HCT116 (cell line): ENCODE measurements at regions of chr11 and their contacts with region 1.

Region 1: GRCh38 chr11:121591405-121592033 is 138.8 kb upstream of the SORL1-AS1 start:
- DNase-seq: peak; percentile 64
- ATAC-seq: peak; percentile 86
- H3K4me3 ChIP-seq: no peak overlapping the region
- H3K27ac ChIP-seq: no peak overlapping the region
- H3K4me1 ChIP-seq: peaks cover 5 to 15% of the 10 kb centered on the region in 2 experiments; a peak in 3 of 4 replicates
- H3K27me3 ChIP-seq: no peaks in the 10 kb centered on the region
- CTCF ChIP-seq: peak; percentile 78 to 93 (median 88)
- POLR2A ChIP-seq: no peak
- RAD21 ChIP-seq: peak; percentile 97

Region 2: GRCh38 chr11:120929664-120930154 is 661.8 kb before region 1 on chr11:
- CTCF ChIA-PET with region 1: no interaction called
- POLR2A ChIA-PET with region 1: no interaction called
- RAD21 ChIA-PET with region 1: no interaction called
- intact Hi-C with region 1: loop called (anchors 10 kb)
- DNase-seq: peak; percentile 61
- ATAC-seq: peak; percentile 97
- H3K4me3 ChIP-seq: no peak overlapping the region
- H3K27ac ChIP-seq: no peak overlapping the region
- H3K4me1 ChIP-seq: peaks cover 2 to 8% of the 10 kb centered on the region in 2 experiments; a peak in 1 of 4 replicates
- H3K27me3 ChIP-seq: no peaks in the 10 kb centered on the region
- CTCF ChIP-seq: peak; percentile 69 to 87 (median 87)
- POLR2A ChIP-seq: no peak
- RAD21 ChIP-seq: peak; percentile 66

Region 3: DNA sequence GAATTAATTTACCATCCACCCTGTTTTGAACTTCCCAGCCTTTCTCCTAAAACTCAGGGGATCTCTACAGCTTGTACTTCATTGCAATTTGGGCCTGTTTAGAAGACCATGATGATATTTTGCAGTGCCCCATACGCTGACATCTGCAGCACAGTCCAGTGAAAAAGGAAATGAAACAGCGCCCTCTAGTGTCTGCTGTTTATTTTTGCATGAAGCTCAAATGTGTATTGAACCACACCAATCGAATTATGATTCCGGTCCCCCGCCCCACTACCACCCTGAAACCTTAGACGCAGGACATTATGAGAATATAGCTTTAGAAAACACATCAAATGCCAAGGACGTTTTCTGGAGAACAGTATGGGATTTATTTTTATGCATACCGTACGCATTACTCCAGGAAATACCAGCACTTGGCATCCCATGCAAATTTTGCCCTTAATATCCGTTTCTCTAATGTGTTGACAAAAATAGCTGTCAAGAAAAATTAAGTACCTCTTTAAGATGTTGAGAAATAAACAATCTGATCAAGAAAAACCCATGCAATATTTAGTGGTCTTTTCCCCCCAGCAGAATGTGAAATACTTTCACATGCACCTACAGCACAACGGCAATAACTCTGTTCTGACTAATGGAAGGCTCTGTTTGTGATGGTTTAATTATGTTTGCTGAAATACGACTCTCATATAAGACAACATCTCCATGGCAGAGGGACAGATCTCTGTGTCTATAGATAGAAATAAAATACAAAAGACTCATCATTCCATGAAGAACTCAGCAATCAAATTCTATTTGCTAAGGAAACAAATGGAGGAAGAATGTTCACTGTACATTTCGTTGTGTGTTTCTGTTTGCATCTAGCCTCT is 396.6 kb before region 1 on chr11:
- CTCF ChIA-PET with region 1: no interaction called
- POLR2A ChIA-PET with region 1: no interaction called
- RAD21 ChIA-PET with region 1: interaction called in 1 of 2 experiments, 4 read pairs
- intact Hi-C with region 1: loop called (anchors 2 kb)
- DNase-seq: peak; percentile 63
- ATAC-seq: peak; percentile 99
- H3K4me3 ChIP-seq: peak overlapping the region; percentile 1 to 27; a peak in 2 of 4 replicates
- H3K27ac ChIP-seq: no peak overlapping the region
- H3K4me1 ChIP-seq: peaks cover 0 to 7% of the 10 kb centered on the region in 2 experiments; a peak in 2 of 4 replicates
- H3K27me3 ChIP-seq: no peaks in the 10 kb centered on the region; the same call in 1 of the 2 replicates
- CTCF ChIP-seq: peak; percentile 71 to 84 (median 76)
- POLR2A ChIP-seq: no peak
- RAD21 ChIP-seq: peak; percentile 91

Region 4: GRCh38 chr11:121318848-121319834 is 272.4 kb before region 1 on chr11:
- CTCF ChIA-PET with region 1: interaction called, 18 read pairs
- POLR2A ChIA-PET with region 1: no interaction called
- RAD21 ChIA-PET with region 1: no interaction called
- intact Hi-C with region 1: loop called (anchors 1 kb)
- DNase-seq: peak; percentile 32
- ATAC-seq: peak; percentile 90
- H3K4me3 ChIP-seq: no peak overlapping the region
- H3K27ac ChIP-seq: no peak overlapping the region
- H3K4me1 ChIP-seq: no peaks in the 10 kb centered on the region
- H3K27me3 ChIP-seq: no peaks in the 10 kb centered on the region
- CTCF ChIP-seq: peak; percentile 53 to 79 (median 76); a peak in 5 of 6 replicates
- POLR2A ChIP-seq: no peak
- RAD21 ChIP-seq: peak; percentile 78

Region 5: GRCh38 chr11:121451986-121452608 is 139.4 kb before region 1 on chr11 and contains the start of gene SORL1:
- CTCF ChIA-PET with region 1: interaction called, 10 read pairs
- POLR2A ChIA-PET with region 1: no interaction called
- RAD21 ChIA-PET with region 1: interaction called in 1 of 2 experiments, 4 read pairs
- intact Hi-C with region 1: loop called (anchors 1 kb)
- DNase-seq: no peak
- ATAC-seq: peak; percentile 94
- H3K4me3 ChIP-seq: peak within 1 kb of the TSS; percentile 69 to 87
- H3K27ac ChIP-seq: peak within 1 kb of the TSS; percentile 68
- H3K4me1 ChIP-seq: peaks cover 8 to 16% of the 10 kb centered on the region in 2 experiments; a peak in 3 of 4 replicates
- H3K27me3 ChIP-seq: no peaks in the 10 kb centered on the region
- CTCF ChIP-seq: peak; percentile 43 to 65 (median 47); a peak in 5 of 6 replicates
- POLR2A ChIP-seq: peak; percentile 52
- RAD21 ChIP-seq: peak; percentile 66
- total RNA-seq, gene SORL1: 17.4 TPM

Region 6: GRCh38 chr11:121681550-121682268 is 90.2 kb after region 1 on chr11:
- CTCF ChIA-PET with region 1: no interaction called
- POLR2A ChIA-PET with region 1: no interaction called
- RAD21 ChIA-PET with region 1: no interaction called
- intact Hi-C with region 1: no loop called
- DNase-seq: no peak
- ATAC-seq: no peak
- H3K4me3 ChIP-seq: no peak overlapping the region
- H3K27ac ChIP-seq: no peak overlapping the region
- H3K4me1 ChIP-seq: no peaks in the 10 kb centered on the region; a peak in 1 of 4 replicates
- H3K27me3 ChIP-seq: no peaks in the 10 kb centered on the region
- CTCF ChIP-seq: no peak
- POLR2A ChIP-seq: no peak
- RAD21 ChIP-seq: no peak

Region 7: GRCh38 chr11:122038543-122038942 is 447.0 kb after region 1 on chr11:
- CTCF ChIA-PET with region 1: no interaction called
- POLR2A ChIA-PET with region 1: no interaction called
- RAD21 ChIA-PET with region 1: no interaction called
- intact Hi-C with region 1: no loop called
- DNase-seq: no peak
- ATAC-seq: no peak; the same call in 1 of the 2 replicates
- H3K4me3 ChIP-seq: no peak overlapping the region
- H3K27ac ChIP-seq: no peak overlapping the region
- H3K4me1 ChIP-seq: peaks cover 0 to 7% of the 10 kb centered on the region in 2 experiments; a peak in 1 of 4 replicates
- H3K27me3 ChIP-seq: no peaks in the 10 kb centered on the region
- CTCF ChIP-seq: no peak
- POLR2A ChIP-seq: no peak
- RAD21 ChIP-seq: no peak

Region 8: DNA sequence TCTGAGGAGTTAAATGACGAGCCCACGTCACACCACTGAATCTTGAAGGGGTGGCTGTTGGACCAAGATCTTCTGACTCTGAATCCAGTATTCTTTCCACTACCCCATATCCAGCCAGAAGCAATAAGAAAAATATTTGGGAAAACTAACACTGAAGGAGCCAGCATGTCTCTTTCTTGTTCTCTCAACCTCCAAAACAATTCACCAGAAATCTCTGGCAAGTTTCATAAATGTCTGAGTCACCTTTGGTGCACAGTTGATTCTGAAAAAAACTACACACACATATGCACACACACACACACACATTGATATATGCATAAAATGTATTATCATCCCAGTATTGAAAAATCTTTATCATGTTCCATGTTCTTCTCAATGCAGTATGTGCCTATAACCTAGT is 628.8 kb after region 1 on chr11:
- CTCF ChIA-PET with region 1: no interaction called
- POLR2A ChIA-PET with region 1: no interaction called
- RAD21 ChIA-PET with region 1: no interaction called
- intact Hi-C with region 1: no loop called
- DNase-seq: no peak
- ATAC-seq: no peak
- H3K4me3 ChIP-seq: no peak overlapping the region
- H3K27ac ChIP-seq: no peak overlapping the region
- H3K4me1 ChIP-seq: peaks cover 0 to 4% of the 10 kb centered on the region in 2 experiments; a peak in 2 of 4 replicates
- H3K27me3 ChIP-seq: no peaks in the 10 kb centered on the region
- CTCF ChIP-seq: no peak
- POLR2A ChIP-seq: no peak
- RAD21 ChIP-seq: no peak